Activated B cell treated with CpG ODN at 0.5 μM for 24 hours (primary cell): ENCODE measurements at regions of chr2 and their contacts with region 1.

Region 1: GRCh38 chr2:106734165-106734564 is 151.8 kb downstream of the ST6GAL2 start:
- DNase-seq: no peak
- ATAC-seq: no peak
- H3K4me3 Mint-ChIP-seq: no peak overlapping the region
- H3K27ac Mint-ChIP-seq: no peak overlapping the region
- H3K4me1 Mint-ChIP-seq: no peaks in the 10 kb centered on the region
- H3K27me3 Mint-ChIP-seq: no peaks in the 10 kb centered on the region
- CTCF ChIP-seq: no peak

Region 2: GRCh38 chr2:106719222-106719621 is 14.9 kb before region 1 on chr2:
- CTCF ChIA-PET with region 1: no interaction called
- POLR2A ChIA-PET with region 1: no interaction called
- intact Hi-C with region 1: no loop called
- DNase-seq: no peak
- ATAC-seq: no peak
- H3K4me3 Mint-ChIP-seq: no peak overlapping the region
- H3K27ac Mint-ChIP-seq: no peak overlapping the region
- H3K4me1 Mint-ChIP-seq: no peaks in the 10 kb centered on the region
- H3K27me3 Mint-ChIP-seq: no peaks in the 10 kb centered on the region
- CTCF ChIP-seq: no peak

Region 3: GRCh38 chr2:106812383-106812782 is 78.2 kb after region 1 on chr2:
- CTCF ChIA-PET with region 1: no interaction called
- POLR2A ChIA-PET with region 1: no interaction called
- intact Hi-C with region 1: loop called (anchors 2 kb)
- DNase-seq: no peak
- ATAC-seq: no peak
- H3K4me3 Mint-ChIP-seq: no peak overlapping the region
- H3K27ac Mint-ChIP-seq: no peak overlapping the region
- H3K4me1 Mint-ChIP-seq: no peaks in the 10 kb centered on the region
- H3K27me3 Mint-ChIP-seq: no peaks in the 10 kb centered on the region
- CTCF ChIP-seq: no peak